Psoas muscle (tissue), 8 donors: ENCODE measurements at regions of chr6 and their contacts with region 1.

Region 1: DNA sequence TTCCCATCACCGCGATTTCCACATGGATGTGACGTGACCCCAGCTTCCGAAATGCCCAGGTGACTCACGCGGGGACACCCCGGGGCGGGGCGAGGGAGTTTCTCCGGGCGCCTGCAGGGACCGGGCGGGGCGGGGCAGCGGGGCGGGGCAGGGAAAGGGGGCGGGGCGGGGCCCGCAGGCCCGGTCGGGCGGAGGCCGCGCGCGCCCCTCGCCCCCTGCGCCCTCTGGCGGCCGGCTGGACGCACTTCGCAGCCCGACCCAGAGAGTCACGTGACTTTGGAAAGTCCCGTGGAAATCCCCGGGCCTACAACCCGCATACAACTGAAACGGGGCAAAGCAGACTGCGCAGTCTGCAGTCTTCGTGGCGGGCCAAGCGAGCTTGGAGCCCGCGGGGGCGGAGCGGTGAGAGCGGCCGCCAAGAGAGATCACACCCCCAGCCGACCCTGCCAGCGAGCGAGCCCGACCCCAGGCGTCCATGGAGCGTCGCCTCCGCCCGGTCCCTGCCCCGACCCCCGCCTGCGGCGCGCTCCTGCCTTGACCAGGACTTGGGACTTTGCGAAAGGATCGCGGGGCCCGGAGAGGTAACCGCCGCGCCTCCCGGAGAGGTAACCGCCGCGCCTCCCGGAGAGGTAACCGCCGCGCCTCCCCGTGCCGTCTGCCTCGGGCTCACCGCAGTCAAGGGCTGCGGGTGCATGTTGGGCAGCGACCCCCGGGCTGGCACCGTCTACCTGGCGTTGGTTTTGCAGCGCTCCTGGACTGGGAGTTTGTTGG is at the start of gene TNFAIP3:
- DNase-seq: peak; percentile 95 to 97
- ATAC-seq: peak; percentile 92 to 95 (median 92)
- H3K4me3 ChIP-seq: peak within 1 kb of the TSS; percentile 80
- H3K27ac ChIP-seq: peak within 1 kb of the TSS; percentile 97
- H3K4me1 ChIP-seq: peaks cover 39% of the 10 kb centered on the region
- H3K27me3 ChIP-seq: no peaks in the 10 kb centered on the region
- CTCF ChIP-seq: peak; percentile 95
- total RNA-seq, gene TNFAIP3: 4.0 to 12.8 (median 8.3) TPM

Region 2: GRCh38 chr6:137218917-137219663 is 648.0 kb before region 1 on chr6 and contains the start of gene IFNGR1:
- intact Hi-C with region 1: loop called (anchors 10 kb)
- DNase-seq: peak; percentile 97 to 99
- ATAC-seq: peak; percentile 91 to 97 (median 94)
- H3K4me3 ChIP-seq: peak within 1 kb of the TSS; percentile 93
- H3K27ac ChIP-seq: peak within 1 kb of the TSS; percentile 100
- H3K4me1 ChIP-seq: peaks cover 44% of the 10 kb centered on the region
- H3K27me3 ChIP-seq: no peaks in the 10 kb centered on the region
- CTCF ChIP-seq: no peak
- total RNA-seq, gene IFNGR1: 36.9 to 72.2 (median 51.6) TPM

Region 3: DNA sequence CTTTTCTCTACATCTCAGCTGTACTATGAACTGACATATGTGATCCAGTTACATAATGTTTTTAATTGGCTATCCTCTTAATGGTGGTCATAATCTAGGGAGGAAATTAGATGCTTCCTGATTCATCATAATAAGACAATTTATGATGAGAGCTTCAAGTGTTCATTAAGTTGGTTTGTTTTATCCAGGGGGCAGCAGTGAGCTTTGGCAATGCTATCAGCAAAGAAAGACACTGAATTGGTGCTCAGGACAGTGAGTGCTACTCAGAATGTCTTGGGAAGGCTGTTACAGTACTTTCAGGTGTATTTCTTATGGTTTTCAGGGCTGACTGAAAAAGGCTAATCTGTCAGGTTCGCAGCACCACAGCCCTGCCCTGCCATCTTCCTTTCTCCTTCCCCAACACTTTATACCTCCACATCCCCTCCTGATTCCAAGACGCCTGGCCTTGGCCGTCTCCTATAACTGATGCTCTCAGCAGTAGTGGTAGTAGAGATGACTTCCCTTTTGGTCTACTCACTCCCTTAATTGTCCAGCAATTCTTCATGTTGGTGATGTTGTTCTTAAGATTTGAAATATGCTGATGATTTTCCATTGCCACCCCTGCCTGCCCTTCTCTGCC is 67.0 kb before region 1 on chr6:
- intact Hi-C with region 1: no loop called
- DNase-seq: peak in 1 of 2 donors; percentile 17
- ATAC-seq: peak in 1 of 4 donors; percentile 42
- H3K4me3 ChIP-seq: no peak overlapping the region
- H3K27ac ChIP-seq: no peak overlapping the region
- H3K4me1 ChIP-seq: no peaks in the 10 kb centered on the region
- H3K27me3 ChIP-seq: no peaks in the 10 kb centered on the region
- CTCF ChIP-seq: peak; percentile 47

Region 4: GRCh38 chr6:137944793-137945498 is 77.8 kb after region 1 on chr6:
- intact Hi-C with region 1: loop called (anchors 2 to 5 kb)
- DNase-seq: no peak
- ATAC-seq: peak; percentile 74 to 92 (median 76)
- H3K4me3 ChIP-seq: no peak overlapping the region
- H3K27ac ChIP-seq: no peak overlapping the region
- H3K4me1 ChIP-seq: no peaks in the 10 kb centered on the region
- H3K27me3 ChIP-seq: no peaks in the 10 kb centered on the region
- CTCF ChIP-seq: peak; percentile 82

Region 5: DNA sequence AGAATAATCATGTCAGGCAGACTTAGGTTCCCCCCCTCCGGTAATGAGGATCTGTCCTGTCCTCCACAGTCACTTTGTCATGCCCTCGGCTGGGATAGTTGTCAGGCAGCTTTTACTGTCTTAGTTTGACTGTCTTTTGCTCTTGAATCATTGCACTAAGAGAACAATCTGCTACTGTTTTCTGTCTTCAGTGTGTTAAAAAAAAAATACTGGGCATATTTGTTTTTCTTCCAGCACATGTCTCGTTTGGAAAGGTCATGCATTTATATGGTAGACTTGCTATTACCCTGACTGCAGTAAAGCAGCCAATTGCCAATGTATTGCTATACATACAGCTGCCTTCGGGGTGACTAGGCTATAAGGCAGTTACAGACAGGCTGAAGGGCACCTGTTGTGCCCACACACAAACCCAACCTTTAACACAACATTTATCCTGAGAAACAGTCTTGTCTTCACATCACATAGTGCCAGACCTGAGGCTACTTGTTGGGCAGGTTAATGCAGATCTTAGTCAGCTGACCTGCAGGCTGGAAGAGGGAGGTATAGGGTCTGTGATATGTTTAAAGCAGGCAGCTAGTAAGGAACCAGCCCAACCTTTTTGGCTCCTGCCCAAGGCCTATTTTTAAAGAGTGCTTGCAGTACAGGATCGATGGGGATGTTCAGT is 321.3 kb after region 1 on chr6:
- intact Hi-C with region 1: no loop called
- DNase-seq: no peak
- ATAC-seq: no peak
- H3K4me3 ChIP-seq: no peak overlapping the region
- H3K27ac ChIP-seq: no peak overlapping the region
- H3K4me1 ChIP-seq: no peaks in the 10 kb centered on the region
- H3K27me3 ChIP-seq: no peaks in the 10 kb centered on the region
- CTCF ChIP-seq: no peak